GM10248 (cell line): ENCODE measurements at regions of chr2 and their contacts with region 1.

Region 1: DNA sequence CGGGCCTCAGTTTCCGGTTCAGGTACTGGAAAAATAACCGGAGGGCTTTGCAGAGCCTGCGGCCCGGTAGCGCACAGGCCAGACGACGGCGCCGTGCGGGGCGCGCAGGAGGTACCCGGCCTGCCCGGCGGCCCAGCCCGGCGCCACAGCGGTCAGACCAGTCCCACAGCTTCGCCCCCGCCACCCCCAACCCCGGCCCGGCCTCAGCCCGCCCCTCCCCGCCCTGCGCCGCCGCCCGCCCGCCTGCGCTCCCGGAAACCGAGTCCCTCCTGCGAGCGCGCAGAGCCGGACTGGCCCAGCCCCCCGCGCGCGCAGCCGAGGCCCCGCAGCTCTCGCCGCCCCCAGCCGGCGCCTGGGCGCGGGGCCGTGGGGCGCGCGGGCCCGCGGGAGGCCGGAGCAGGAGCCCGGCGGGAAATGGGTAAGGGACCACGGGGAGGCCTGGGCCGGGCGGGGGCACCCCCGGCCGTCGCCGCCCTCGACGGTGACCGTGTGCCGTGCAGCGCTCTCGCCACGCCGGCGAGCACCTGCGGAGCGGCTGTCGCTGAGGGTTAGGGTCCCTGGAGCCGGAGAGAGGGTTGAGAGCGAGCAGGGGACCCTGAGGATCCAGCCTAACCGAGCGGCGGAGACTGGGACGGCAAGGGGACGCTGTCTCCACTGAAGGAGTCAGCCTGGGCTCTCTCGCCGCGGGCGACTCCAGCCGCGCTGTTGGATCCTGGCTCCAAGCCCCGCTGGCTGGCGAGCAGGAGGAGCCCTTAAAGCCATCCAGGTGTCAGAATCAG is 16.5 kb upstream of the PSD4 start:
- DNase-seq: peak; percentile 67
- CTCF ChIP-seq: no peak

Region 2: GRCh38 chr2:113173542-113174395 is 16.5 kb after region 1 on chr2 and contains the start of gene PSD4:
- CTCF ChIA-PET with region 1: interaction called, 22 read pairs
- POLR2A ChIA-PET with region 1: no interaction called
- DNase-seq: peak; percentile 90
- CTCF ChIP-seq: no peak